HepG2 (cell line): ENCODE measurements at regions of chr7 and their contacts with region 1.

Region 1: GRCh38 chr7:149147072-149147751 is at the start of gene ZNF398:
- DNase-seq: peak; percentile 45
- ATAC-seq: peak; percentile 83
- H3K4me3 ChIP-seq: peak within 1 kb of the TSS; percentile 87 to 97 (median 93)
- H3K27ac ChIP-seq: peak within 1 kb of the TSS; percentile 89
- H3K4me1 ChIP-seq: peaks cover 28% of the 10 kb centered on the region; the same call in 1 of the 2 replicates
- H3K27me3 ChIP-seq: no peaks in the 10 kb centered on the region; a peak in 1 of 5 replicates
- CTCF ChIP-seq: peak; percentile 66
- EP300 ChIP-seq: no peak
- POLR2A ChIP-seq: peak; percentile 69 to 79; a peak in 3 of 4 replicates
- RAD21 ChIP-seq: peak; percentile 68
- total RNA-seq, gene ZNF398: 8.9 and 10.4 TPM in 2 replicates

Region 2: GRCh38 chr7:149125863-149126661 is 21.1 kb before region 1 on chr7 and contains the start of gene ZNF425:
- CTCF ChIA-PET with region 1: interaction called, 26 read pairs
- POLR2A ChIA-PET with region 1: interaction called, 42 read pairs
- in situ Hi-C with region 1: no loop called
- intact Hi-C with region 1: loop called (anchors 1 kb)
- DNase-seq: peak; percentile 85
- ATAC-seq: peak; percentile 92
- H3K4me3 ChIP-seq: peak within 1 kb of the TSS; percentile 81 to 98 (median 92)
- H3K27ac ChIP-seq: peak within 1 kb of the TSS; percentile 86
- H3K4me1 ChIP-seq: peaks cover 18% of the 10 kb centered on the region
- H3K27me3 ChIP-seq: no peaks in the 10 kb centered on the region; a peak in 2 of 5 replicates
- CTCF ChIP-seq: peak; percentile 97
- EP300 ChIP-seq: peak in 1 of 2 experiments; percentile 62; a peak in 1 of 4 replicates
- POLR2A ChIP-seq: peak; percentile 96 to 97
- RAD21 ChIP-seq: peak; percentile 85; the same call in 1 of the 2 replicates
- total RNA-seq, gene ZNF425: 0.97 and 1.1 TPM in 2 replicates

Region 3: DNA sequence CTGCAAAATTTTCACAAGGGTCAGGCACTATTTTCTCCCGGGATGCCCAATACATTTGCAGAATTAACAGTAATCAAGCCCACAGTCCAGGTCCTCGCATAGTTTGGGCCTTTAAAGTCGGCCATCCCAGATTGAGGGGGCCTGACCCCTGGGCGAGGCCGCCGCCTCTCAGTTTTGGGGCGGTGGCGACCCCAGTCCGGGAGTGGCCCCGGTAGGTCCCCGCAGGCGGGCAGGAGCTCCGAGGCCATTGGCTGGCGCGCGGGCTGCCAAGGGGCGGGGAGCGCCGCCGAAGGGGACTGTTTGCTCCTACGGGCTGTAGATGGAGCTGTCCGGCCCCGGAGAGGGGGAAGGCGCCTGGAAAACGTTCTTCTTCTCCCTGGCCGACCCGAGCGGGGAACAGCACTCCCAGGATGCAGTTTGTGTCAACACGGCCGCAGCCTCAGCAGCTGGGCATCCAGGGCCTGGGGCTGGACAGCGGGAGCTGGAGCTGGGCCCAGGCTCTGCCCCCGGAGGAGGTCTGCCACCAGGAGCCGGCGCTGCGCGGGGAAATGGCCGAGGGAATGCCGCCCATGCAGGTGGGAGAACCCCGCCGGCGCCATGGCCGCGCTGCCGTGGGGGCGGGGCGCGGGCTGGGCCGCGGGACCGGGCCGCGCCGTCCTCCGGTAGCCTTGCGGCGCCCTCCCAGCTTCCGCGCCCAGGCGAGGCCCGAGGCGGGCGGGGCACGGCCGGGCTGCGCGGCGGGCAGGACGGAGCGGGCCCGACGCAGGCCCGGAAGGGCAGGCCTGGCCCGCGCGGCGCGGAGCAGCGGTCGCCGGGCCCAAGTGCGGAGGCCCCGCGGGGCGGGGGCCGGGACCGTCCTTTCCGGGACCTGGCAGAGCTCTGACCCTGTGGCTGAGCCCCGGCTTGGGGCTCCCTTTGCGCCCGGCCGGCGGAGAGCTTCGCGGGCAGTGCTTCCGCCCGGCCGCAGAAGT is 48.3 kb after region 1 on chr7 and contains the start of gene ZNF282:
- CTCF ChIA-PET with region 1: interaction called, 4 read pairs
- POLR2A ChIA-PET with region 1: interaction called, 9 read pairs
- in situ Hi-C with region 1: no loop called
- intact Hi-C with region 1: loop called (anchors 1 kb)
- DNase-seq: peak; percentile 85
- ATAC-seq: peak; percentile 95
- H3K4me3 ChIP-seq: peak within 1 kb of the TSS; percentile 81 to 92 (median 90)
- H3K27ac ChIP-seq: peak within 1 kb of the TSS; percentile 86
- H3K4me1 ChIP-seq: peaks cover 25% of the 10 kb centered on the region
- H3K27me3 ChIP-seq: peaks cover 0 to 1% of the 10 kb centered on the region in 2 experiments; a peak in 1 of 5 replicates
- CTCF ChIP-seq: peak; percentile 92
- EP300 ChIP-seq: no peak; a peak in 1 of 4 replicates
- POLR2A ChIP-seq: peak; percentile 77 to 80
- RAD21 ChIP-seq: peak; percentile 84
- total RNA-seq, gene ZNF282: 19.3 and 20.9 TPM in 2 replicates